CD4-positive, alpha-beta T cell (primary cell): ENCODE measurements at regions of chr6 and their contacts with region 1.

Region 1: DNA sequence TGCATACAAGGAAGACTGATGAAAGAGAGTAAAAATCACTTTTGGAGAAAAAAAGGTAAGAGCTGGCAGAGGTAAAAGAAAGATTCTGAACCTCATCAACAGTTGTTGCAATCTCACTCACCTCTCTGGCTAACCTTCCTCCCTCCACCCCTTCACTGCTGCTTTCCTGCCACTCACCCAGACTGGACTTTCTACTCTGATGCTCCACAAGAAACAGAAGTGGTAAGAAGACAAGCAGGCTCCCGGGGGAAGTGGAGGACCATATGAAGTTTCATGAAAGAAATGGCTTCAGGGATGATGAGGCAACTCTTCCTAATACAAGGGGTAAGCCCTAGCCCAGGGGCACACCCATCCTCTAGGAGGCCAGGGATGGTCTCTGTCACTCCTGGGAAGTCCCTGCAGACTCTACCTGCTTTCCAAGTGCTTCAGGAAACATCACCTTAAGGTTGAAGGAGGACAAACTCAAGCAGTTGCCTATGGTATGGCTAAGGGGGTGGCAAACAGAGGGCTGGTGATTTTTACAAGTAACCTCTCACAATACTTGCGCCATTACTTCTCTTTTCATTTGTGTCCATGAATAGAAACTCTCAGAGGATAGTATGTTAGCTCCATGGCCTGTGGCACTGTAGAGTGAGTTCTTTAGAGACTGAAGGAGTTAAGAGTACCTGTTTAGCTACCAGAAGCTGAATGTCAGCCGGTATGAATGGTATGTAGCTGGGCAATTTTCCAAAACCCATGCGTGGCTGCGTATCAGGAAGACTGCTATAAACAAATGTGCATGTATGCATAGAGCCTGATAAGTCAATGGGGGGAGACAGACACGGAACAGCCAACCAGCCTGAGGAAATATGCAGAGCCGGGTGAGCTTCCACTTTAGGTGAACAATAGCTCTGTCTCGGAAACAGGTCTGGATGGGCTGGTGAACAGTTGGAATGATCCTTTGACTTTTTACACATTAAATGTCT is 112.0 kb downstream of the BACH2 start:
- DNase-seq: peak in 3 of 14 experiments; percentile 22 to 47 (median 40)
- ATAC-seq: peak; percentile 25
- H3K4me3 ChIP-seq: no peak overlapping the region
- H3K4me3 Mint-ChIP-seq: peak overlapping the region; percentile 76
- H3K27ac ChIP-seq: peak overlapping the region in 1 of 2 donors; percentile 17
- H3K27ac Mint-ChIP-seq: peak overlapping the region; percentile 99
- H3K4me1 ChIP-seq: peaks cover 26% of the 10 kb centered on the region
- H3K4me1 Mint-ChIP-seq: peaks cover 85% of the 10 kb centered on the region
- H3K27me3 ChIP-seq: no peaks in the 10 kb centered on the region
- H3K27me3 Mint-ChIP-seq: no peaks in the 10 kb centered on the region
- CTCF ChIP-seq: no peak

Region 2: DNA sequence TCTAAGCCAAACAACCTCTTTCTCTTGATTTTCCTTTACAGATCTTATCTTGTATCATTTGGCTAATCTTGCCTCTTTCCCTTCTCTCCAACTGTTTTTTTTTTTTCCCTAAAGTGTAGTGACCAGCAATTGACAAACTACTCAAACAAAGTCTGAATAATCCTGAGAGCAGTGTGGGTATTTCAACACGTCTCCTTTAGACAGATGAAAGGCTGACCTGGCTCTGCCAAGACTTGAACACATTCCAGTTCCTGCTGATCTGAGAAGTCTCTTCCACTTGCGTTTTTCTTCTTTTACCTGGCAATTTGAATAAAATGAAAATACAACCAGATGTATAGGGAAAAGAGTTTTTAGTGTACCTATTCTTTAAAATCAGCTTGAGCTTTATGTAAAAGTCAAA is 121.9 kb before region 1 on chr6:
- CTCF ChIA-PET with region 1: no interaction called
- POLR2A ChIA-PET with region 1: no interaction called
- intact Hi-C with region 1: no loop called
- DNase-seq: no peak
- ATAC-seq: no peak
- H3K4me3 ChIP-seq: no peak overlapping the region
- H3K4me3 Mint-ChIP-seq: no peak overlapping the region
- H3K27ac ChIP-seq: no peak overlapping the region
- H3K27ac Mint-ChIP-seq: no peak overlapping the region
- H3K4me1 ChIP-seq: peaks cover 8% of the 10 kb centered on the region
- H3K4me1 Mint-ChIP-seq: peaks cover 33% of the 10 kb centered on the region
- H3K27me3 ChIP-seq: no peaks in the 10 kb centered on the region
- H3K27me3 Mint-ChIP-seq: no peaks in the 10 kb centered on the region
- CTCF ChIP-seq: no peak

Region 3: GRCh38 chr6:90173262-90173925 is 11.2 kb before region 1 on chr6:
- CTCF ChIA-PET with region 1: no interaction called
- POLR2A ChIA-PET with region 1: interaction called, 12 read pairs
- intact Hi-C with region 1: loop called in 1 of 2 experiments (anchors 1 kb)
- DNase-seq: peak in 2 of 14 experiments; percentile 41 to 47
- ATAC-seq: peak; percentile 51
- H3K4me3 ChIP-seq: no peak overlapping the region
- H3K4me3 Mint-ChIP-seq: peak overlapping the region; percentile 53
- H3K27ac ChIP-seq: no peak overlapping the region
- H3K27ac Mint-ChIP-seq: peak overlapping the region; percentile 82
- H3K4me1 ChIP-seq: peaks cover 27% of the 10 kb centered on the region
- H3K4me1 Mint-ChIP-seq: peaks cover 81% of the 10 kb centered on the region
- H3K27me3 ChIP-seq: no peaks in the 10 kb centered on the region
- H3K27me3 Mint-ChIP-seq: no peaks in the 10 kb centered on the region
- CTCF ChIP-seq: no peak